ENCODE measurements at regions of chr22 and their contacts with region 1.

Region 1: DNA sequence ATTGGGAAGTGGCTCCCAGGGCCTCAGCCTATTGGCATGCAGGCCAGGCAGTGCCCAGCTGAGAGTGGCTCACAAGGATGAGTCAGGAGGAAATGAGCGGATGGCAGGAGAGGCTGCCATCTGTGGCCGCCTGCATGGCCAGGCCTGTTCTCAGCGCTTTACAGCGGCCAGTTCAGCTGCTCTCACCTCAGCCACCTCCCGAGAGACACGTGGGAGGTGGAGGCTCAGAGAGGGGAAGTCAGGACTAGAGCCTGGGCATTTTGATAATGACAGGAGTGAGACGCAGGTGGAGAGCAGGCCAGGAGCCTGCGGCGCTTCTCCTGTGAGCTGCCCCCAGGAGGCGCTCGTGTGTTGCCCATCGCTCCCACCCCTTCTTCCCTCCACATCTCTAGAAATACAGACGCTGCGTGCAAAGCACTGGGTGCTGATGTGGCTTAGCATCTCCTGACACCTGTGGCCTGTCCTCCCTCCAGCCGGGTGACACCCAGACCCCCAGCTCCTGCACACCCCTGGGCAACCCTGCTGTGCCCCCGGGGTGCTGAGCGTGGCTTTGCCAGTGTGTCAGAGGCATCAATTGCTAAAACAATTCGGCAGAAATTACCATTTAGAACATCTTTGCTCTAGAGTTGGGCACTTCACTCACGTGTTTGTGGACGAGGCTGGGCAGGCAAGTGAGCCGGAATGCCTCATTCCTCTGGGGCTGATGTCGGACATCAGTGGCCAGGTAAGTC is 21.4 kb upstream of the PANX2 start:
- DNase-seq: peak; percentile 78 to 88 (median 86)
- H3K4me3 ChIP-seq: peak overlapping the region in 1 of 7 experiments; percentile 16
- H3K27ac ChIP-seq: no peak overlapping the region
- H3K4me1 ChIP-seq: peaks cover 0 to 12% (median 7%) of the 10 kb centered on the region in 4 experiments
- H3K27me3 ChIP-seq: no peaks in the 10 kb centered on the region

Region 2: DNA sequence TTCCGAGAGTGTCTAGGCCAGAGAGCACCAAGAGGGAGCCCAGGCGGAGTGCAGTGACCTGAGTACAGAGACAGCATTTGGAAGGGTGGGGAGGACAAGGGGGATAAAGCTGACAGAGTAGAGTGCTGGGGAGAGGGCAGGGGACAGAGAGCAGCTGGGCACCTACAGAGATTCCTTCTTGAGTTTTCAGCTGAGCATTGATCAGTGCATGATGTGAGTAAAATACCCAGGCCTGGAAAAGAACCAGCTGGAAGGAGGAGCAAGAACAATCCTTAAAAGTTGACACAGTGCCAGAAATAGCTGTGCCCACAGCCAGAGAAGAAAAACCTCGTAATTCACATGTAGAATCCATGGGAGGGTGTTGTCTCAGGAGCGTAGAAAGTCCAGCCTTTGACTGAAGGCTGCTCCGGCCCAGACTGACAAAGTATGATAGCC is 12.6 kb before region 1 on chr22:
- CTCF ChIA-PET with region 1: interaction called, 11 read pairs
- POLR2A ChIA-PET with region 1: no interaction called
- DNase-seq: no peak
- H3K4me3 ChIP-seq: no peak overlapping the region
- H3K27ac ChIP-seq: no peak overlapping the region
- H3K4me1 ChIP-seq: peaks cover 0 to 2% (median 0%) of the 10 kb centered on the region in 4 experiments
- H3K27me3 ChIP-seq: no peaks in the 10 kb centered on the region

Region 3: GRCh38 chr22:50209893-50210292 is 60.7 kb after region 1 on chr22:
- CTCF ChIA-PET with region 1: interaction called, 26 read pairs
- POLR2A ChIA-PET with region 1: no interaction called
- DNase-seq: peak; percentile 62 to 86 (median 75)
- H3K4me3 ChIP-seq: no peak overlapping the region
- H3K27ac ChIP-seq: no peak overlapping the region
- H3K4me1 ChIP-seq: peaks cover 0 to 3% (median 0%) of the 10 kb centered on the region in 4 experiments
- H3K27me3 ChIP-seq: no peaks in the 10 kb centered on the region

Region 4: GRCh38 chr22:50215297-50216054 is 66.3 kb after region 1 on chr22:
- CTCF ChIA-PET with region 1: interaction called, 18 read pairs
- POLR2A ChIA-PET with region 1: no interaction called
- DNase-seq: no peak
- H3K4me3 ChIP-seq: no peak overlapping the region
- H3K27ac ChIP-seq: no peak overlapping the region
- H3K4me1 ChIP-seq: peaks cover 0 to 8% (median 3%) of the 10 kb centered on the region in 4 experiments
- H3K27me3 ChIP-seq: no peaks in the 10 kb centered on the region

Measured in common myeloid progenitor, CD34-positive (primary cell).